ENCODE measurements at regions of chr15 and their contacts with region 1.

Region 1: GRCh38 chr15:63752075-63752684 is 81.6 kb downstream of the HERC1 start:
- DNase-seq: peak in 1 of 10 donors; percentile 21

Region 2: GRCh38 chr15:63582718-63583426 is 169.3 kb before region 1 on chr15:
- intact Hi-C with region 1: no loop called
- DNase-seq: no peak

Region 3: DNA sequence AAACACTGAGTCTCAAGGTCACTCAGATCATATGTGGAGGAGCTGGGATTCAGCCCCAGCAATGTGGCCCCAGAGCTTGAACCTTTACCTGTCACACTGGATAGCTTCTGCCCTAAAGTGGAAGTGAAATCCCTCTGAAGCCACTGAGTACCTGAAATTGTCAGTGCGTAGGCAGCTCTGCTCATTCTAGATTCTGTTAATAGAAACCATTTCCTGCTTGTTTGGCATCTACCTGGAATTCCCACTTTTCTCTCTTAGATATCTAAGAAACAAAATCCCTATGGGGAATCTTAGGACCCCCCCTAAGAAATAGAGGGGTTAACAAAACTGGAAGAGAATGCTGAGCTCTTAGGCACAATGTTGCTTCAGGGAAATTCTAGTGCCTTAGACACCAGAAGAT is 125.2 kb before region 1 on chr15:
- intact Hi-C with region 1: no loop called
- DNase-seq: no peak

Region 4: DNA sequence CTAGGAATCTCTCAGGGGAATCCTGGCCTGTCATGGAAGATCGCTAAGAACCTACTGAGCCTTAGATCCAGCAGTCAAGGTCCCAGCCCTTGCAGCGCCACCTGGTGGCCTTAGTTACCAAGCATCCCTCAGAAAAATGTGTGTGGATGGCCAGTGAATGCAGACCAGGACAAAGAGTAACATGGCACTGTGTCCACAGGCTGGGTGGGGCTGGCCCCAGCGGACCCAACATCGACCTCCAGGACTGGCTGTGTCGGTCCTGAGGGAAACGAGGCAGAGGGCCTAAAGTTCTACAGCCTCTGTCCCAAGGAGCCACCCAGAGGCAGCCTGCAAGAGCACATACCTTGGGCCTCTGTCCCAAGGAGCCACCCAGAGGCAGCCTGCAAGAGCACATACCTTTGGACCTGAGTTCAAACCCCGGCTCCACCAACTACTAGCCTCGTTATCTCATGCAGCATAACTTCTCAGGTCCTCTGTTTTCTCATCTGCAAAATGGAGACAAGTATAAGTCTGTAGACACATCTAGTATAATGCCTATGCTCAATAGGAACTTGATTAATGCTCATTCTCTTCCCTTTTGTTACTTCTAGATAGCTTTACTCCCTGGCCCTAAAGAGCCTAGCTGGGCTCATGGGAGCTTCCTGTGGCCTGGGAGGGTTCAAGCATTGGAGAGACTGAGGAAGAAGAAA is 139.0 kb after region 1 on chr15:
- intact Hi-C with region 1: loop called (anchors 1 kb)
- DNase-seq: peak; percentile 56 to 97 (median 84)

Region 5: GRCh38 chr15:64067564-64068030 is 315.4 kb after region 1 on chr15:
- intact Hi-C with region 1: loop called (anchors 1 kb)
- DNase-seq: peak in 7 of 10 donors; percentile 43 to 89 (median 71)

Measured in posterior cingulate gyrus (tissue), 11 donors.